ENCODE measurements at regions of chr17 and their contacts with region 1.

Region 1: DNA sequence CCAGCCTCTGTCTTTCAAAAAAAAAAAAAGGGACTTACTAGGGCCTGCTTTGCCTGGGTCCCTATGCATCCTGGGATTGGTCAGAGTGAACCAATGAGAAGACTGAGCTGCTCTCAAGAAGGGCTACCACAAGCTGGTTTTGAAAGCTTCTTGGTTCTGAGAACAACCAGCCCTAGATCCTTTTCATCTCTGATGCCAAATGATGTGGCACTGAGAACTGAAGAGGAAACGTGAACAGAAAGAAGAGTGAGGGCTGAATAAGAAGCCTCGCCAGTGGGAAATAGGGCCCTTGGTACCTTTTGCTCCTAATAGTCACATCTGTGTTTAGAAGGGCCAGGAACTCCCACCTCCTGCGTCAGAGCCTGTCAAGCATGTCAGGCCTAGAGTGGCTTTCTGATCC is 10.7 kb downstream of the TACO1 start:
- DNase-seq: no peak
- H3K4me3 ChIP-seq: no peak overlapping the region
- H3K27ac ChIP-seq: no peak overlapping the region
- H3K4me1 ChIP-seq: peaks cover 0 to 6% of the 10 kb centered on the region in 2 donors
- H3K27me3 ChIP-seq: no peaks in the 10 kb centered on the region
- CTCF ChIP-seq: no peak
- POLR2A ChIP-seq: no peak

Region 2: GRCh38 chr17:63419949-63420867 is 191.1 kb before region 1 on chr17:
- intact Hi-C with region 1: loop called (anchors 5 kb)
- DNase-seq: no peak
- H3K4me3 ChIP-seq: no peak overlapping the region
- H3K27ac ChIP-seq: no peak overlapping the region
- H3K4me1 ChIP-seq: no peaks in the 10 kb centered on the region
- H3K27me3 ChIP-seq: no peaks in the 10 kb centered on the region
- CTCF ChIP-seq: no peak
- POLR2A ChIP-seq: no peak

Region 3: GRCh38 chr17:63478791-63479494 is 132.4 kb before region 1 on chr17:
- intact Hi-C with region 1: loop called in 1 of 2 experiments (anchors 10 kb)
- DNase-seq: peak; percentile 85 to 93 (median 90)
- H3K4me3 ChIP-seq: no peak overlapping the region
- H3K27ac ChIP-seq: no peak overlapping the region
- H3K4me1 ChIP-seq: peaks cover 17 to 37% of the 10 kb centered on the region in 2 donors
- H3K27me3 ChIP-seq: no peaks in the 10 kb centered on the region
- CTCF ChIP-seq: peak; percentile 59 to 91 (median 80)
- POLR2A ChIP-seq: no peak

Measured in adrenal gland (tissue), 19 donors.